HCT116 (cell line): ENCODE measurements at regions of chr9 and their contacts with region 1.

Region 1: GRCh38 chr9:130343445-130343918 is 77.9 kb downstream of the HMCN2 start:
- DNase-seq: no peak
- ATAC-seq: peak; percentile 69
- H3K4me3 ChIP-seq: no peak overlapping the region
- H3K27ac ChIP-seq: no peak overlapping the region; the same call in 1 of the 2 replicates
- H3K4me1 ChIP-seq: no peaks in the 10 kb centered on the region; a peak in 1 of 4 replicates
- H3K27me3 ChIP-seq: no peaks in the 10 kb centered on the region
- CTCF ChIP-seq: peak; percentile 65 to 94 (median 81)
- POLR2A ChIP-seq: no peak
- RAD21 ChIP-seq: peak; percentile 83

Region 2: GRCh38 chr9:130107234-130107861 is 236.1 kb before region 1 on chr9:
- CTCF ChIA-PET with region 1: interaction called, 3 read pairs
- POLR2A ChIA-PET with region 1: no interaction called
- RAD21 ChIA-PET with region 1: no interaction called
- intact Hi-C with region 1: loop called (anchors 1 kb)
- DNase-seq: peak; percentile 45
- ATAC-seq: peak; percentile 92
- H3K4me3 ChIP-seq: no peak overlapping the region
- H3K27ac ChIP-seq: no peak overlapping the region
- H3K4me1 ChIP-seq: no peaks in the 10 kb centered on the region
- H3K27me3 ChIP-seq: no peaks in the 10 kb centered on the region
- CTCF ChIP-seq: peak; percentile 69 to 92 (median 82)
- POLR2A ChIP-seq: no peak
- RAD21 ChIP-seq: peak; percentile 92

Region 3: DNA sequence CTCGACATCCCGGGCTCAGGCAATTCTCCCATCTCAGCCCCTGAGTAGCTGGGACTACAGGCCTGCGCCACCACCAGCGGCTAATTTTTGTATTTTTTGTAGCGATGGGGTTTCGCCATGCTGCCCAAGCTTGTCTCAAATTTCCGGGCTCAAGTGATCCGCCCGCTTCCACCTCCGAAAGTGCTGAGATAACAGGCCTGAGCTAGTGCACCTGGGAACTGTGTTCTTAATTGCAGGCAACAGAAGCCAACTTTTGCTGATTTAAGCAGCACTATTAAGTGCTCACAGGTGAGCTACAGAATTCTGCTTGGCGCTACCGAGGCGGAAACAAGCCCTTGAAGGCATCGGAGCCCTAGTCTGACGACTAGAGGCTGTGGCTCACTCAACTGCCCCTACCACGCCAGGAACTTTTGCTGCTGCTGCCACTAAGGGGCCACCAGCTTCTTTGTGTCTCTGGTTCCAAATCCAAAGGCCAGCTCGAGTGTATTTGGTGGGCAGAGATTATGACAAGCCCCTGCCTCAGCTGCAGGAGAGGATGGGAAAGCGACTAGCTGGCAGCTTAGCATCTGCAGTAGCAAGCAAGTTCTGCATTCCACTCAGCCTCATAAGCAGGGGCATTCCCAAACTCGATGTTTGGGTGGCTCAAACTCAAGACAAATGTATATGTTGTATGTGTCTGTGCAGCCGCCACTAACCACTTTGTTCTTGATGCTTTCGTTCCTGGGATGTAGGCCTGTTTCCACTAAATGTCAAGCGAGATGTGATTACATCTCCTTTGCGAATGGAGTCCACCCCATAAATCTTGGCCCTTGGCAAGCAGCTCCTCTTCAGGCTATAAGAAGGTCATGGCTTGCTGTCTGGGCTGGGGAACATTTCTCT is 88.5 kb before region 1 on chr9:
- CTCF ChIA-PET with region 1: no interaction called
- POLR2A ChIA-PET with region 1: no interaction called
- RAD21 ChIA-PET with region 1: no interaction called
- intact Hi-C with region 1: loop called (anchors 5 kb)
- DNase-seq: no peak
- ATAC-seq: no peak
- H3K4me3 ChIP-seq: no peak overlapping the region
- H3K27ac ChIP-seq: no peak overlapping the region
- H3K4me1 ChIP-seq: no peaks in the 10 kb centered on the region
- H3K27me3 ChIP-seq: 0 out of 2 replicates have a peak, but pooled peaks cover under 1% of the 10 kb centered on the region
- CTCF ChIP-seq: no peak
- POLR2A ChIP-seq: no peak
- RAD21 ChIP-seq: no peak